ENCODE measurements at regions of chr9 and their contacts with region 1.

Region 1: DNA sequence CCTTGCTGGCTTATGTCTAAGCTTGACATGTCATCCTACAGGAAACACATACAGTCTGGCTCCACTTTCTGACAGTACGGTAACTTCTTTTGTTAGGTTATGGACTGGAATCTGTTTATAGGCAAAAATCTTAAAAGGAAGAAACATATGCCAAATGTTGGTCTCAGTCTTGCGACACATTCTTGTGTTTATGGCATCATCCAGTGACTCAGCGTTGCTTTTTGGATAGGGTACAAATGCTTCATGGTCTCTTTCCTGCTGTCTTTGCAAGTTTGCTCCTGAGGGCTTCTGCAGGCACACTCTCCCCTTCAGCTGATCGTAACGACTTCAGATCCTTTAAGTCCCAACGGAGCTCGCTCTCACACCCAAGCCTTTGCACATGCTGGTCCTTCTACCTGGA is 23.5 kb upstream of the TNFSF8 start:
- DNase-seq: no peak
- H3K4me3 Mint-ChIP-seq: no peak overlapping the region
- H3K27ac Mint-ChIP-seq: peak overlapping the region; percentile 35
- H3K4me1 Mint-ChIP-seq: peaks cover 53% of the 10 kb centered on the region
- H3K27me3 Mint-ChIP-seq: no peaks in the 10 kb centered on the region

Region 2: GRCh38 chr9:114397848-114398605 is 555.9 kb before region 1 on chr9:
- intact Hi-C with region 1: loop called (anchors 5 kb)
- DNase-seq: peak; percentile 94
- H3K4me3 Mint-ChIP-seq: peak overlapping the region; percentile 97
- H3K27ac Mint-ChIP-seq: peak overlapping the region; percentile 86
- H3K4me1 Mint-ChIP-seq: peaks cover 46% of the 10 kb centered on the region
- H3K27me3 Mint-ChIP-seq: peaks cover 3% of the 10 kb centered on the region

Region 3: DNA sequence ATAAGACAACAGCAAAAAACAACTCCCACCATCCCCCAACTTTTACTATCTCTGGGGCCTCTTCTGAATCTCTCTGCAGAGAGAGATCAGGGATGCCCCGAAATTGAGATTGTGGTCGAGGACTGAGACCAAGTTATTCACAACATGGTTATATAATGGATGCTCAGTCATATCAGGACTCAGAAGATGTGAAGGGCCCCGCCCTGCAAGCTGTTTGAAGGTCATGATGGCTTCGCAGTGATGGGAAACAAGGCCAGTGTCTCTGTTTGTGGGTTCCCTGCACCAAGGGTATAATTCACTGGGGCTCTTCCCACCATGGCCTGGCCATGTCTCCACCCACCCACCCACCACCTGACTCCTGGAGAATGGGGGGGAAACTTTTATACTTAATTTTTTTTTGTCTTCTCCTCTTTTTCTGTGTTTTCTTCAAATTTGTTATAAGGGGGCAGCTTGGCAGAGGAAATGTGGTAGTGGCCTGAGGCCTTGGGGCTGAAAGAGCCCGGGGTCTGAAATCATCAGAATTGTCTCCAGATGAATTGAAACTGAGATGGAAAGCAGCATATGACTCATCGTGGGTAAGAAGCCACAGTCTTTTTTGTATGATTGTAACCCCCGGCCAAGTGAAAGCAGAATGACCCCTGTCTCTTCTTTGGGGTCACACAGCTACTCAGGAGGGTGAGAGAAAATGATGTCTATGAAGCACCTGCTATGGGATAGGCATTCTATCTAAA is 256.9 kb before region 1 on chr9:
- intact Hi-C with region 1: loop called (anchors 1 kb)
- DNase-seq: peak; percentile 80
- H3K4me3 Mint-ChIP-seq: peak overlapping the region; percentile 46
- H3K27ac Mint-ChIP-seq: peak overlapping the region; percentile 95
- H3K4me1 Mint-ChIP-seq: peaks cover 92% of the 10 kb centered on the region
- H3K27me3 Mint-ChIP-seq: no peaks in the 10 kb centered on the region

Region 4: DNA sequence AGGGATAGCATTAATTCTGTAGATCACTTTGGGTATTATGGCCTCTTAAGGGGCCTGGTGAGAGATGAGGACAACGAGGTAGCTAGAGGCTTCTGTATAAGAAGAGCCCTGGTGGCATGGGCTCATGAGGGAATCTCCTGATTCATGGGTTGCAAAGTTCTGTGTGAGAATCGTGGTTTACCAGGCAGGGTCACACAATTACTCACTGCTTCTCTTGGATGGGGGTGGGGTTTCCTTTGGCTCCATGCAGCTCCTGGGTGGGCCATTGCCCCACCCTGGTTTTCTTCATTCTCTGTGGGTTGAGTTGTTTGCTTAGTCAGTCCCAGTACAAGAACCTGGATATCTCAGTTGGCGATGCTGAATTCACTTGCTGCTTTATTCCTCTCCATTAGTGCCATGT is 117.1 kb before region 1 on chr9:
- intact Hi-C with region 1: no loop called
- DNase-seq: peak; percentile 25
- H3K4me3 Mint-ChIP-seq: no peak overlapping the region
- H3K27ac Mint-ChIP-seq: no peak overlapping the region
- H3K4me1 Mint-ChIP-seq: peaks cover 29% of the 10 kb centered on the region
- H3K27me3 Mint-ChIP-seq: no peaks in the 10 kb centered on the region

Region 5: GRCh38 chr9:114894801-114895433 is 59.0 kb before region 1 on chr9:
- intact Hi-C with region 1: loop called (anchors 2 kb)
- DNase-seq: peak; percentile 54
- H3K4me3 Mint-ChIP-seq: peak overlapping the region; percentile 16
- H3K27ac Mint-ChIP-seq: peak overlapping the region; percentile 90
- H3K4me1 Mint-ChIP-seq: peaks cover 57% of the 10 kb centered on the region
- H3K27me3 Mint-ChIP-seq: no peaks in the 10 kb centered on the region

Region 6: GRCh38 chr9:114930056-114930812 is 23.7 kb before region 1 on chr9 and contains the start of gene TNFSF8:
- intact Hi-C with region 1: loop called (anchors 1 kb)
- DNase-seq: peak; percentile 73
- H3K4me3 Mint-ChIP-seq: peak within 1 kb of the TSS; percentile 98
- H3K27ac Mint-ChIP-seq: peak within 1 kb of the TSS; percentile 99
- H3K4me1 Mint-ChIP-seq: peaks cover 62% of the 10 kb centered on the region
- H3K27me3 Mint-ChIP-seq: no peaks in the 10 kb centered on the region
- total RNA-seq, gene TNFSF8: 200 and 207 TPM in 2 replicates

Region 7: DNA sequence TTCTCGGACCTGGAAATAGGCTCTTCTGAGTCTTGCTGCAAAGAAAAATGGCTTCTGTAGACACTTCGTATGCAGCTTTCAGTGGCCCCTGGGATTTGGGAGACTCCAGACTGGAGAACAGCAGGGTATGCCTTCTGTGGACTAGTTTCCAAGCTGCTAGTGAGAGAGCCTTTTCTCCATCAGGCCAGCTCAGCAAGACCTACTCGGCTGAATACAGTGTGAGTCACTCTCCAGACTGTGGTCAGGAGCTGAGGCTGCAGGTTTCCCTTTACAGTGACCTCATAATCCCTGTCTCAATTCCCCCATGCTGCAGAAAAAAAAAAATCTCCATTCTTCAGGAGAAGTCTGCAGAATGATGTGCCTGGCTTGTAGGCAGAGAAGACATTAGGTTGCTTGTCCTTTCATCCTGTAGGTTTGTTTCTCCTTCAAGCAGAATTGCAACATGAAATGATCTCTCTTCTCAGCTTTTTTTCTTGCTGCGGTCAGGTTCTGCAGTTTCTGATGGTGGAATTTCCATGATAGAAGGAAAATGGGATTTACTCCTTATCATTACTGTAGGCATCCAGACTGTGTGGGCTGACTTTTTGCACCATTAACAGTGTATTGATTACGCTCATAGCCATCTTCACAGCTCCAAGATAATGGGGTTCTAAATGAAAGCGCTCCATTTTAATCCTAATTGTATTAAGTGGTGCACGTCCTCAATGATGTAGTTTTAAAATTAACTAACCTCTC is 54.8 kb after region 1 on chr9:
- intact Hi-C with region 1: loop called (anchors 1 kb)
- DNase-seq: peak; percentile 23
- H3K4me3 Mint-ChIP-seq: no peak overlapping the region
- H3K27ac Mint-ChIP-seq: no peak overlapping the region
- H3K4me1 Mint-ChIP-seq: peaks cover 97% of the 10 kb centered on the region
- H3K27me3 Mint-ChIP-seq: no peaks in the 10 kb centered on the region

Region 8: DNA sequence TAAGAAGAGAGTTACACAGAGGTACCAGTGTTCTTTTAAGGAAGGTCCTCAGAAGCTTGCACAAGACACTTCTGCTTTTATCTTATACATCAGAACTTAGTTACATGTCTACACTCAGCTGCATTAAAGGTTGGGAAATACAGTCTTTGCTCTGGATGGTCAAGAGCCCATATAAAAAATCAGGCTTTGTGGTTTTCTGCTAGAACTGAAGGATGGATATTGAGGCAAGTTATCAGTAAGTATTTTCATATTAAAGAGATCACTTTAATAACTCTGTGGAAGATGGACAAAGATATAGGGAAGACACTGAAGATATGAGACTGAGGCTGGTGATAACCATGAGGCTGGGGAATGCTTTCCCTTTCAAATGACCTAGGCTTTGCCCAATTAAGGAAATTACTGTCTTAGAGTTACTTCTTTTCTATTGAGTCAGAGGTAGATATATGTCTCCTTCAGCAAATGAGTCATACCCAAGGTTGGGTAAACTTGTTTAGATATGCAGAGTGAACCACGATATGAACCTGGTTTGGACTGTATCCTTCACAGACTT is 251.1 kb after region 1 on chr9:
- intact Hi-C with region 1: loop called (anchors 1 kb)
- DNase-seq: no peak
- H3K4me3 Mint-ChIP-seq: no peak overlapping the region
- H3K27ac Mint-ChIP-seq: no peak overlapping the region
- H3K4me1 Mint-ChIP-seq: peaks cover 50% of the 10 kb centered on the region
- H3K27me3 Mint-ChIP-seq: peaks cover 13% of the 10 kb centered on the region